ENCODE measurements at regions of chr1 and their contacts with region 1.

Region 1: GRCh38 chr1:209248649-209249279 is 334.8 kb upstream of the CAMK1G start:
- DNase-seq: peak in 5 of 9 experiments; percentile 19 to 58 (median 32)
- ATAC-seq: no peak
- H3K4me3 ChIP-seq: no peak overlapping the region
- H3K4me3 Mint-ChIP-seq: no peak overlapping the region
- H3K27ac ChIP-seq: no peak overlapping the region
- H3K27ac Mint-ChIP-seq: no peak overlapping the region
- H3K4me1 ChIP-seq: no peaks in the 10 kb centered on the region
- H3K4me1 Mint-ChIP-seq: no peaks in the 10 kb centered on the region
- H3K27me3 ChIP-seq: no peaks in the 10 kb centered on the region
- H3K27me3 Mint-ChIP-seq: no peaks in the 10 kb centered on the region
- CTCF ChIP-seq: peak; percentile 93

Region 2: DNA sequence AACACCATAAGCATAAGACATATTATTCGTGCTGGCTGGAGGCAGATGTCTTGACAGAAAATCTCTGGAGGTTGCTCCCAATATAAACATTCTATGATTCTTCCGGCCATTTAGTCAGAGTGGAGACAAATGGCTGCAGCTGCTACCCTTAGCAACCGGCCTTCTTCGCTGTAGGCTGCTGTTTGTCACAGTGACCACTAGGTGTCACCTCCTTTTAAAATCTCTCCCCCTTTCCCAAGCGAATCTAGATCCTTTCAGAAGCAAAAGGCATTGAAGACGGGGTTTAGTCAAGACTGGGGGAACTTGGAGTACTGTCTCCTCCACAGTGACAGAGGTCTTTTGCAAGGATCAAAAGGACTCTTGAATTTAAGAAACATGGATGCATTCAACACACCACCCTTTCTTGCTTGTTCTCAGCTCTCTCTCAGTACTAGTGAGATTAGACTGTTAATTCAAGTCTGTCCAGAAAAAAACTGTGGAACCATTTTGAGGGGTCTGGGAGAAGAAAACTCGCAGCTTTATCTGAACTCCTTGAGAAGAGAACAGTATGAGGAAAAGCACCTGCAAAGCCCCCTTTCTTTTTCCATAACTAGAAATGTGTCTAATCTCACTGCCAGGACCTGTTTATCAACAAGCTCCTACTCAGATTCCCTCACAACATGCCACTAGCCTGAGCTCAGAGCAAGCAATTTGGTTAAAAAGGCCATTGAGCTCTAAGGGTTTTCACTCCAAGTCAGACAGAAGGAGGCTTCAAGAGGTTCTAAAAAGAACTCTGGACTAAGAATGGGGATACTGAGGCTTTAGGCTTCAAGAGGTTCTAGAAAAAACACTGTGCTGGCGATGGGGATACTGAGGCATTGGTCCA is 596.2 kb before region 1 on chr1:
- CTCF ChIA-PET with region 1: no interaction called
- POLR2A ChIA-PET with region 1: no interaction called
- intact Hi-C with region 1: loop called in 1 of 2 experiments (anchors 5 kb)
- DNase-seq: peak in 3 of 9 experiments; percentile 10 to 42 (median 17)
- ATAC-seq: no peak
- H3K4me3 ChIP-seq: no peak overlapping the region
- H3K4me3 Mint-ChIP-seq: no peak overlapping the region
- H3K27ac ChIP-seq: no peak overlapping the region
- H3K27ac Mint-ChIP-seq: no peak overlapping the region
- H3K4me1 ChIP-seq: no peaks in the 10 kb centered on the region
- H3K4me1 Mint-ChIP-seq: no peaks in the 10 kb centered on the region
- H3K27me3 ChIP-seq: no peaks in the 10 kb centered on the region
- H3K27me3 Mint-ChIP-seq: peaks cover 32% of the 10 kb centered on the region
- CTCF ChIP-seq: peak; percentile 62

Region 3: GRCh38 chr1:209238356-209238755 is 10.4 kb before region 1 on chr1:
- CTCF ChIA-PET with region 1: interaction called, 10 read pairs
- POLR2A ChIA-PET with region 1: no interaction called
- intact Hi-C with region 1: no loop called
- DNase-seq: no peak
- ATAC-seq: no peak
- H3K4me3 ChIP-seq: no peak overlapping the region
- H3K4me3 Mint-ChIP-seq: no peak overlapping the region
- H3K27ac ChIP-seq: no peak overlapping the region
- H3K27ac Mint-ChIP-seq: no peak overlapping the region
- H3K4me1 ChIP-seq: no peaks in the 10 kb centered on the region
- H3K4me1 Mint-ChIP-seq: no peaks in the 10 kb centered on the region
- H3K27me3 ChIP-seq: no peaks in the 10 kb centered on the region
- H3K27me3 Mint-ChIP-seq: no peaks in the 10 kb centered on the region
- CTCF ChIP-seq: no peak

Region 4: GRCh38 chr1:209260136-209260535 is 11.4 kb after region 1 on chr1:
- CTCF ChIA-PET with region 1: interaction called, 11 read pairs
- POLR2A ChIA-PET with region 1: no interaction called
- intact Hi-C with region 1: no loop called
- DNase-seq: no peak
- ATAC-seq: no peak
- H3K4me3 ChIP-seq: no peak overlapping the region
- H3K4me3 Mint-ChIP-seq: no peak overlapping the region
- H3K27ac ChIP-seq: no peak overlapping the region
- H3K27ac Mint-ChIP-seq: no peak overlapping the region
- H3K4me1 ChIP-seq: no peaks in the 10 kb centered on the region
- H3K4me1 Mint-ChIP-seq: no peaks in the 10 kb centered on the region
- H3K27me3 ChIP-seq: no peaks in the 10 kb centered on the region
- H3K27me3 Mint-ChIP-seq: peaks cover under 1% of the 10 kb centered on the region
- CTCF ChIP-seq: no peak

Region 5: DNA sequence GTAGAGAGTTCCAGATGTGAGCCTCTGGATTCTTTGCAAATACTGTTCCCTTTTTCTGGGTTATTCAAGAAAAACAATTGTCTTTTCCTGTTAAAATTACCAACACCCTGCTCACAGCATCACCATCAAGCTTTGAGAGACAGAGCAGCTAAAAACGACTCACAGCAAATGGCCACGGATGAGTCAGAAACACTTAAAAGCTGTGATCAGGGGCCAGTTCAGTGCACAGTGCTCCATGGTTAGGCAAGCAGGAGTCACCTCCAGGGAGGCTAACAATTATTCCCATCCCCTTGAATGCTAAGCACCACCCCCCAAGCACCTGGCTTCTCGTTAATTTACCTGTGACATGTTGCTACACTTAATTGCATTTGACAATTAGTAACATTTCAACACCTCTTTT is 206.4 kb after region 1 on chr1:
- CTCF ChIA-PET with region 1: no interaction called
- POLR2A ChIA-PET with region 1: no interaction called
- intact Hi-C with region 1: no loop called
- DNase-seq: no peak
- ATAC-seq: no peak
- H3K4me3 ChIP-seq: no peak overlapping the region
- H3K4me3 Mint-ChIP-seq: no peak overlapping the region
- H3K27ac ChIP-seq: no peak overlapping the region
- H3K27ac Mint-ChIP-seq: no peak overlapping the region
- H3K4me1 ChIP-seq: no peaks in the 10 kb centered on the region
- H3K4me1 Mint-ChIP-seq: no peaks in the 10 kb centered on the region
- H3K27me3 ChIP-seq: no peaks in the 10 kb centered on the region
- H3K27me3 Mint-ChIP-seq: peaks cover 21% of the 10 kb centered on the region
- CTCF ChIP-seq: no peak

Region 6: GRCh38 chr1:209542585-209542984 is 293.8 kb after region 1 on chr1:
- CTCF ChIA-PET with region 1: no interaction called
- POLR2A ChIA-PET with region 1: no interaction called
- intact Hi-C with region 1: no loop called
- DNase-seq: no peak
- ATAC-seq: no peak
- H3K4me3 ChIP-seq: no peak overlapping the region
- H3K4me3 Mint-ChIP-seq: no peak overlapping the region
- H3K27ac ChIP-seq: no peak overlapping the region
- H3K27ac Mint-ChIP-seq: no peak overlapping the region
- H3K4me1 ChIP-seq: no peaks in the 10 kb centered on the region
- H3K4me1 Mint-ChIP-seq: no peaks in the 10 kb centered on the region
- H3K27me3 ChIP-seq: no peaks in the 10 kb centered on the region
- H3K27me3 Mint-ChIP-seq: peaks cover 28% of the 10 kb centered on the region
- CTCF ChIP-seq: no peak

Measured in CD8-positive, alpha-beta T cell (primary cell).